ENCODE measurements at regions of chr6 and their contacts with region 1.

Region 1: DNA sequence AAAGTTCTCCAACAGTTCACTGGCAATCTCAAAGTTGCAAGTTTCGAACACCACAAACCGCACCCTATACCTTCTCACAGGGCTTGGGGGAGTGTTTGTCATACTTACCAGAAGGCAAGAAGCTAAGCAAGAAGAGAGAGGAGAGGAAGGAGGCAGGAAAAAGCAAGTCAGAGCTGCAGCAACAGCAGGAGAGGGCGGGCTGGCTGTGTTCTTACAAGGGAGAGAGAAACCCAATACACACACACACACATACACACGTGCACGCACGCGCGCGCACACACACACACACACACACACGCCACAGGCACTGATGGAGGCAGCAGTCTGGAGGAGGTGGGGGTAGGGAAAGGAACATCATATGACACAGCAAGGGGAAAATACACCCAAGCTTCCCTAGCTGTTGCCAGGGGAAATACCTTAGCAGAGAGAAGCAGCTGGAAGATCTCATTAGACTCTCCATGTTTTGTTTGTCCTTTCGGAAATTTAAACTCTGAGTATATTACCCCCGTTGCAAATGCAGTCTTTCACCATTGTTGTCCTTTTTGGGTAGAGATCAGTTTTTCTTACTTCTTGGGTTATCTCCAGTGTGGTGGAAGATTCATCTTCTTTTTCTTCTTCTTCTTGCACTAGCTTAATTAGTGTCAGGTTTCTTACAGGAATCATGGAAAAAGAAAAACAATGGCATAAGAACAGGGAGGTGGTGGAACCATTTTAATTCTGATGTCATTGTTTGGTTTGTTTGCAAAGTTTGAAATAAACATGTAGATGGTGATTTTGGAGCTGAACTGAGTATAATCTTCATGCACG is at the start of gene TXLNB:
- DNase-seq: peak; percentile 80
- H3K4me3 Mint-ChIP-seq: peak within 1 kb of the TSS; percentile 73
- H3K27ac Mint-ChIP-seq: peak within 1 kb of the TSS; percentile 98
- H3K4me1 Mint-ChIP-seq: peaks cover 84% of the 10 kb centered on the region
- H3K27me3 Mint-ChIP-seq: peaks cover 2% of the 10 kb centered on the region
- total RNA-seq, gene TXLNB: 0.08 TPM in 1 of 2 replicates, not detected in the other

Region 2: DNA sequence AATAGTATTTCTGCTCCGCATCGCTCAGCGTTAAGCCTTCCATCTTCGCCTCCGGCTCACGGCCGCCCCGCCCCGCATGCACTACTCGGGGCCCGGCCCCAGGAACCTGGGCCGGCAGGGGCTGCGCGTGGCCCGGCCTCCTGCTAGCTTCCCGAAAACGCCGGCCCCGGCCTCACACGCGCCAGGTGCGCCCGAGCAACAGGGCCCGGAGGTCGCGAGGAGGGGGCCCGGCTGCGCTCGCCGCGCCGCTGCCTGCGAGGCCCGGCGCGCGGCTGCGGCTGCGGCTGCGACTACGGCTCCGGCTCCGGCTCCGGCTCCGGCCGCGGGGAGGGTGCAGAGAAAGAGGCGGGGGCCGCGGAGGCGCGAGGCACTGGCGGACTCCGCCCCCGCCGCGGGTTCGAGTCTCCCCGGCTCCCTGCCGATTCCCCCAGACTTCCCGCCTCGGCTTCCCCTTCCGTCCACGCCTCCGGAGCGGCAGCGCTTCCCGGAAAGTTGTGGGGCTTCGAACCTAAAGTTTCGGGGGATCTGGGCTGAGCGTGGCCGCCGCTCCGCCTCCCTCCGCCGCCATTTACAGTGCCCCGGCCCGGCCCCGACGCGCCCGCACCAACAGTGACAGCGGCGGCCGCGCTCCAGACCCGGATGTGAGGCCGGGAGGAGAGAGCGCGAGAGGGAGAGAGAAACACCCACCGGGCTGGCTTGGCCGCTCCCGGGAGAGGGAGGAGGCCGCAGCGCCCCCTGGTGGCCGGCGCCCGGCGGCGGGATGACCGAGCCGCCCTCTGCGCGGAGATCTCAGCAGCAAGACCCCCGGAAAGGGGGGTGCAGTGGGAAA is 304.2 kb before region 1 on chr6 and contains the start of gene REPS1:
- intact Hi-C with region 1: loop called (anchors 2 kb)
- DNase-seq: peak; percentile 88
- H3K4me3 Mint-ChIP-seq: peak within 1 kb of the TSS; percentile 89
- H3K27ac Mint-ChIP-seq: peak within 1 kb of the TSS; percentile 92
- H3K4me1 Mint-ChIP-seq: peaks cover 7% of the 10 kb centered on the region
- H3K27me3 Mint-ChIP-seq: no peaks in the 10 kb centered on the region
- total RNA-seq, gene REPS1: 69.6 and 74.6 TPM in 2 replicates

Region 3: DNA sequence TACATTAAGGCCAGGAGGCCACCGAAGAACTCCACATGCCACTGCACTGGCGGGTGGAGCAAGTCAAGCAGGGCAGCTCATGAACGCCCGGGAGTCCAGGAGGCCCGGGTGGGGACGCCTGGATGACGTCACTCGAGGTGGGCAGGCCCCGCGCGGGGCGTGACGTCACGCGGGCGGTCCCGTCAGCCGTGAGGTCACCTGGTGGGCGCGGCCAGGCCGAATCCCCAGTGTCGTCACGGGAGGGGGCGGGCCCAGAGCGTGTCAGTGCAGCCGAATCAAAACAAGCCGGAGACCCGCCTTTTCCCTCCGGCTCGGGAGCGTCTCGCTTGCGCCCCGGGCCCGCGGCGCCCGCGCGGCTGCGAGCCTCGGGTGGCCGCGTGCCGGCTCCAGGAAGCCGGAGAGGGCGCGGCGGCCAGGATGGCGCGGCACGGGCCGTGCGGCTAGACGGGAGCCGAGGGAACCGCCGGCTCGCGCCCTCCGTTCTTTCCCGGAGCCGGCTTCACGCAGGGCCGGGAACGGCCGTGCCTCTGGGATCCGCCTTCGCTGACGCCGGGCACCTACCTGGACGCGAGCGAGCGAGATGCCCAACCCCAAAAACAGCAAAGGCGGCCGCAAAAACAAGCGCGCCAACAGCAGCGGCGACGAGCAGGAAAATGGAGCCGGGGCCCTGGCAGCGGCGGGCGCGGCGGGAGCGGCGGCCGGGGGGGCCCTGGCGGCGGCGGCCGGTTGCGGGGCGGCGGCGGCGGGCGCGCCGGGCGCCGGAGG is 157.0 kb before region 1 on chr6 and contains the start of gene HECA:
- intact Hi-C with region 1: no loop called
- DNase-seq: peak; percentile 97
- H3K4me3 Mint-ChIP-seq: peak within 1 kb of the TSS; percentile 85
- H3K27ac Mint-ChIP-seq: peak within 1 kb of the TSS; percentile 84
- H3K4me1 Mint-ChIP-seq: peaks cover 72% of the 10 kb centered on the region
- H3K27me3 Mint-ChIP-seq: no peaks in the 10 kb centered on the region
- total RNA-seq, gene HECA: 49.1 and 49.9 TPM in 2 replicates

Region 4: GRCh38 chr6:139153855-139154254 is 138.2 kb before region 1 on chr6:
- intact Hi-C with region 1: loop called (anchors 1 kb)
- DNase-seq: no peak
- H3K4me3 Mint-ChIP-seq: peak overlapping the region; percentile 66
- H3K27ac Mint-ChIP-seq: peak overlapping the region; percentile 90
- H3K4me1 Mint-ChIP-seq: peaks cover 73% of the 10 kb centered on the region
- H3K27me3 Mint-ChIP-seq: no peaks in the 10 kb centered on the region

Region 5: DNA sequence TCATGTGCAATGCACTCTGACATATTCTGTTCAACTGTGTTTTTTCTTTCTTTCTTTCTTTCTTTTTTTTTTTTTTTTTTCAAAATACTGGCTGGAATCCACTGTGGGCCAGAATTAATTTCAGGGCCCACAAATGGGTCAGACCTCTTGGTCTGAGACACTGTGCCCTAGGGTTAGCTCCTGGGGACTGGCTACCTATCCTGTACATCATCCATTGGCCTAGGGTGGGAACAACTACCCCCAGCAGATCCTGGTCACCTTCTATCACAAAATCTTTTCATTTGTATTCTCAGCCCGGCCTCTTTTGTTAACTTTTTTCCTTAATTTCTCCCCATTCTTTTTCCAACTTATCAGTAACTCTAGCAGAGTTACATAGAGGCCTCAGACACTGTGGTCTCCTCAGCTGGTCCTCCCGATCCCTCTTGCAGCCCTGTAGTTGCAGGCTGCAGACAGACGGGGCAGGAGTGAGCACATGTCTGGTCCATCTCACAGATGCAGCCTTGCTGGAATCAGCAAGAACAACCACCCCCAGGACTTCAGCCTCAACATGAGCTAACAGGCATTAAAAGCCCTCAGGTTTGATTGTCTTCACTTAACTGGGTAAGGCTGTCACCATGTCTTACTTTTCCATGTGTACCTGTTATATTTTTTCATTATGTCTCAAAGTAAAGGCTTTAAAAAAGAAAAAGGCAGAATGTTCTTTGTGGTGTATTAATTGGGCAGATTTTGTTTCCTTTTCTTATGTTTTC is 41.5 kb before region 1 on chr6:
- intact Hi-C with region 1: loop called (anchors 1 kb)
- DNase-seq: peak; percentile 43
- H3K4me3 Mint-ChIP-seq: peak overlapping the region; percentile 43
- H3K27ac Mint-ChIP-seq: peak overlapping the region; percentile 91
- H3K4me1 Mint-ChIP-seq: peaks cover 45% of the 10 kb centered on the region
- H3K27me3 Mint-ChIP-seq: no peaks in the 10 kb centered on the region

Region 6: GRCh38 chr6:139308286-139308916 is 16.4 kb after region 1 on chr6:
- intact Hi-C with region 1: loop called (anchors 1 kb)
- DNase-seq: no peak
- H3K4me3 Mint-ChIP-seq: no peak overlapping the region
- H3K27ac Mint-ChIP-seq: peak overlapping the region; percentile 78
- H3K4me1 Mint-ChIP-seq: peaks cover 32% of the 10 kb centered on the region
- H3K27me3 Mint-ChIP-seq: peaks cover 6% of the 10 kb centered on the region

Region 7: GRCh38 chr6:139375232-139376016 is 83.4 kb after region 1 on chr6:
- intact Hi-C with region 1: loop called (anchors 1 kb)
- DNase-seq: peak; percentile 81
- H3K4me3 Mint-ChIP-seq: peak overlapping the region; percentile 87
- H3K27ac Mint-ChIP-seq: peak overlapping the region; percentile 98
- H3K4me1 Mint-ChIP-seq: peaks cover 31% of the 10 kb centered on the region
- H3K27me3 Mint-ChIP-seq: no peaks in the 10 kb centered on the region